GM10248 (cell line): ENCODE measurements at regions of chr10 and their contacts with region 1.

Region 1: GRCh38 chr10:108490931-108491330 is 1326.4 kb upstream of the SORCS1 start:
- DNase-seq: no peak
- CTCF ChIP-seq: no peak

Region 2: GRCh38 chr10:108469940-108470339 is 21.0 kb before region 1 on chr10:
- CTCF ChIA-PET with region 1: no interaction called
- POLR2A ChIA-PET with region 1: no interaction called
- DNase-seq: no peak
- CTCF ChIP-seq: no peak

Region 3: GRCh38 chr10:108696792-108697477 is 206.0 kb after region 1 on chr10:
- CTCF ChIA-PET with region 1: no interaction called
- POLR2A ChIA-PET with region 1: no interaction called
- DNase-seq: peak; percentile 20
- CTCF ChIP-seq: no peak

Region 4: DNA sequence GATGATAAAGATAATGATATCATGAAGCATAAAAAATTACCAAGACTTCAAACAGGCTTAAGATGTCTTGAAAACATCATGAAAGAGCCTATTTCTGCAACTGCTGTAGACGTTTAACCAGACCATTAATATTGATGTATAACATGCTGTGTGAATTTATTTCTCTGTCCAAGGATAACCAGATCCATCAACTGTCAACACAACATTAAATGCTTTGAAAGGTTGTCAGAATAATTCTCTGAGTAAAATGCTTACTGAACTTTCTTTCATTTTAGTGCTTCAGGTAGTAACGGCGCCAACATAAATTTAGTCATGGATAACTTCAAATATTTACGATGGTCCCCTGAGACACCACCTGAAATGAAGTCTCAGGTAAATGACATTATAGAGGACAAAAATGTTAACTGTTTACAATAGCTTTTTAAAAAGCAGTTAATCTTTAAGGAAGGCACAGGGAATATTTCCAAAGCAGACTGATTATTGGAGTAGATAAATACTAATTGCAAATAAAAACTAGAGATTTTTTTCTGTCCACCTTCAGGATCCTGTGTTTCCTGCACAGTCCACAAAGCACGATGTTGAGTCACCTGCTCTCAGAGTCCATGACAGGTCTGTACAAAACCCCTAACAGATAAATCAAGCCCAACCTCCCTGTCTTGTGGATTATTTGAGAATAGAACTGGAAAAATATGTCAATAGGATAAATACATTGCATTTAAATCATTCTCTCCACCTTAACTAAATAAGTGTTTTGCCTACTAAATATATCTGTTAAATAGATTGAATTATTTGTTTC is 219.2 kb after region 1 on chr10:
- CTCF ChIA-PET with region 1: no interaction called
- POLR2A ChIA-PET with region 1: interaction called, 10 read pairs
- DNase-seq: no peak
- CTCF ChIP-seq: no peak